A673 (cell line): ENCODE measurements at regions of chr11 and their contacts with region 1.

Region 1: GRCh38 chr11:35617687-35618496 is at the start of gene FJX1:
- DNase-seq: peak; percentile 98
- H3K4me3 ChIP-seq: peak within 1 kb of the TSS; percentile 56
- H3K27ac ChIP-seq: peak within 1 kb of the TSS; percentile 72
- H3K4me1 ChIP-seq: peaks cover 54% of the 10 kb centered on the region
- H3K27me3 ChIP-seq: peaks cover 7% of the 10 kb centered on the region
- CTCF ChIP-seq: no peak
- total RNA-seq, gene FJX1: 40.4 and 50.1 TPM in 2 replicates

Region 2: DNA sequence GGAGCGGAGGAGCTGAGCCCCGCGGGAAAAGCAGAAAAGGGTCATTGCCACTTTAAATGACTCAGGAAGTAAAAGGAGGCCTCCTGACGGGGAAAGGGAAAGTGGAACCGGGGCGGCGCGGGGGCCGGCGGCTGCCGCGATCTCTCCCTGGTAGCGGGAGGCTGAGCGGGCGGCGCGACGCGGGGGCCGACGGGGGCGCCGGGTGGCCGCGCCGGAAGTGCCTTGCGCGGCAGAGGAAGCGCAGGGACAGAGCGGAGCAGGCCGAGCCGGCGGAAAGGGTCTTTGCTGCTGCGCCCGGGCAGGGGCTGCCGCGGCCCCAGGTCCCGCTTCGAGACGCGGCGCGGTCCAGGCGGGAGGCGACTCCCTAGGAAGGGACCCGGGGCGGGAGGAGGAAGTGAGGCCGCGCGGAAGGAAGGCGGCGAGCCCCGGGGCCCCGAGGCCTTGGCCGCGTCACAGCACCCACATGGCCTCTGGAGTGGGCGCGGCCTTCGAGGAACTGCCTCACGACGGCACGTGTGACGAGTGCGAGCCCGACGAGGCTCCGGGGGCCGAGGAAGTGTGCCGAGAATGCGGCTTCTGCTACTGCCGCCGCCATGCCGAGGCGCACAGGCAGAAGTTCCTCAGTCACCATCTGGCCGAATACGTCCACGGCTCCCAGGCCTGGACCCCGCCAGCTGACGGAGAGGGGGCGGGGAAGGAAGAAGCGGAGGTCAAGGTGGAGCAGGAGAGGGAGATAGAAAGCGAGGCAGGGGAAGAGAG is 44.9 kb after region 1 on chr11 and contains the start of gene TRIM44:
- CTCF ChIA-PET with region 1: no interaction called
- POLR2A ChIA-PET with region 1: no interaction called
- intact Hi-C with region 1: loop called (anchors 1 kb)
- DNase-seq: peak; percentile 98
- H3K4me3 ChIP-seq: peak within 1 kb of the TSS; percentile 57
- H3K27ac ChIP-seq: peak within 1 kb of the TSS; percentile 91
- H3K4me1 ChIP-seq: peaks cover 20% of the 10 kb centered on the region
- H3K27me3 ChIP-seq: no peaks in the 10 kb centered on the region
- CTCF ChIP-seq: no peak
- total RNA-seq, gene TRIM44: 179 and 191 TPM in 2 replicates

Region 3: GRCh38 chr11:35943713-35944655 is 326.1 kb after region 1 on chr11 and contains the start of gene LDLRAD3:
- CTCF ChIA-PET with region 1: no interaction called
- POLR2A ChIA-PET with region 1: no interaction called
- intact Hi-C with region 1: loop called (anchors 5 kb)
- DNase-seq: peak; percentile 97
- H3K4me3 ChIP-seq: peak within 1 kb of the TSS; percentile 50
- H3K27ac ChIP-seq: no peak within 1 kb of the TSS
- H3K4me1 ChIP-seq: peaks cover 6% of the 10 kb centered on the region
- H3K27me3 ChIP-seq: peaks cover 12% of the 10 kb centered on the region
- CTCF ChIP-seq: no peak
- total RNA-seq, gene LDLRAD3: 13.1 and 18.0 TPM in 2 replicates

Region 4: DNA sequence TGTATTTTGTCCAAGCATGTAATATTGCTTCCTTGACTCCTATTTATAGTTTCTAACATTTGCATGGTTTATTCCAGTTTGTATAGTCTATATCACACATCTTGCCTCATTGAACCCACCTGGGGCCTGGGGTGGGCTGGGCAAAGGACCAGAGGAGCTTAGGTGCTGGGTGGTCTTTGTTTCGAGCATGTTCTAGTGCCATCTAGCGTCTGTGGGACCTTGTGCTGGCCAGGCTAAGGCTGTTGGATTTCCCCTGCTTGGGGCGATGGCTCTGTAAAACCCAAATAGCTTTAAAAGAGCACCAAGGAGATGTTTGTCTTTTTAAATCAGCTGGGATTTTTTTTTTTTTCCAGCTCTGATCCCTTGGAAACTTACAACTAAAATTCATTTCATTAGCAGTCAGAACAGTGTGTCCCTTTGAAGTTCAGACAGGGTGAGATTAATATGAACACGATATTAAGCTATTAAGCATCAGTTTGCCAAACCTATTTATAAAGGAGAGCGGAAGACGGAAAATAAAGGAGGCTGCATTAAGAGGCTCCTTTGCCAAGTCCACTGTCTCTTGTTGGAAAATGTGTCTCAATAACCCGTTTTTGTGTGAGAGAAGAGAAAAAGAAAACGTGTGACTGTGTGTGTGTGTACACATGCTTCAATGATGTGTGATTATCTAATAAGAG is 514.0 kb after region 1 on chr11:
- CTCF ChIA-PET with region 1: interaction called, 4 read pairs
- POLR2A ChIA-PET with region 1: no interaction called
- intact Hi-C with region 1: loop called (anchors 1 kb)
- DNase-seq: peak; percentile 77
- H3K4me3 ChIP-seq: no peak overlapping the region
- H3K27ac ChIP-seq: no peak overlapping the region
- H3K4me1 ChIP-seq: peaks cover 1% of the 10 kb centered on the region
- H3K27me3 ChIP-seq: no peaks in the 10 kb centered on the region
- CTCF ChIP-seq: peak; percentile 99

Region 5: DNA sequence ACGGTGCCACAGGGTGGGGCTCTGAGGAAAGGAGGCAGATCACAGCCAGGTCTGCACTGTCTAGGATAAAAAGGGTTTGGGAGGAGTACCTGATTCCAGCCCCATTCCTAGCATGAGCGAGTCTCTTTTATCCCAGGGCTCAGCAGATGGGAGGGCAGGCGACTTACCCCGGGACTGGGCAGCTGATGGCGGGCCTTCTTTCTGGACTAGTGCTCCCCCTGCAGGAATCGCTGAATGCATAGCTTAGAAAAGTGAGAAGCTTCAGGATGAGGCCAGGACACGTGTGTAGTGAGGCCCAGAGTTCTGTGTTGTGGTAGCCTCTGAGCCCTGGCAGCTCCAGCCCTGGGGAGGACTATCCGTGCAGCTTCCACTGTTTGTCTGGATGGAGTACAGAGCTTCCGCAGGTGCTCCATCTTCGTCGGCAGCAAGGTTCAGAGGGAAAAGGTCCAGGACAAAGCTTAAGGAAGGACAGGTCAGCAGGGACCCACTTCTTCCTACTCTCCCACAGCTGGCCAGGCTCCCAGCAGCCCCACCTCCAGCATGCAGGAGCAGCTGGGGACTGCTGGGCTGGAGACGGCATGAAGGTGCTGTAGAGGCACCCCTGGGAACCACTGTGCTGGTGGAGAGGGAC is 641.0 kb after region 1 on chr11:
- CTCF ChIA-PET with region 1: interaction called, 6 read pairs
- POLR2A ChIA-PET with region 1: no interaction called
- intact Hi-C with region 1: loop called (anchors 2 kb)
- DNase-seq: peak; percentile 93
- H3K4me3 ChIP-seq: no peak overlapping the region
- H3K27ac ChIP-seq: no peak overlapping the region
- H3K4me1 ChIP-seq: no peaks in the 10 kb centered on the region
- H3K27me3 ChIP-seq: peaks cover 20% of the 10 kb centered on the region
- CTCF ChIP-seq: peak; percentile 99

Region 6: DNA sequence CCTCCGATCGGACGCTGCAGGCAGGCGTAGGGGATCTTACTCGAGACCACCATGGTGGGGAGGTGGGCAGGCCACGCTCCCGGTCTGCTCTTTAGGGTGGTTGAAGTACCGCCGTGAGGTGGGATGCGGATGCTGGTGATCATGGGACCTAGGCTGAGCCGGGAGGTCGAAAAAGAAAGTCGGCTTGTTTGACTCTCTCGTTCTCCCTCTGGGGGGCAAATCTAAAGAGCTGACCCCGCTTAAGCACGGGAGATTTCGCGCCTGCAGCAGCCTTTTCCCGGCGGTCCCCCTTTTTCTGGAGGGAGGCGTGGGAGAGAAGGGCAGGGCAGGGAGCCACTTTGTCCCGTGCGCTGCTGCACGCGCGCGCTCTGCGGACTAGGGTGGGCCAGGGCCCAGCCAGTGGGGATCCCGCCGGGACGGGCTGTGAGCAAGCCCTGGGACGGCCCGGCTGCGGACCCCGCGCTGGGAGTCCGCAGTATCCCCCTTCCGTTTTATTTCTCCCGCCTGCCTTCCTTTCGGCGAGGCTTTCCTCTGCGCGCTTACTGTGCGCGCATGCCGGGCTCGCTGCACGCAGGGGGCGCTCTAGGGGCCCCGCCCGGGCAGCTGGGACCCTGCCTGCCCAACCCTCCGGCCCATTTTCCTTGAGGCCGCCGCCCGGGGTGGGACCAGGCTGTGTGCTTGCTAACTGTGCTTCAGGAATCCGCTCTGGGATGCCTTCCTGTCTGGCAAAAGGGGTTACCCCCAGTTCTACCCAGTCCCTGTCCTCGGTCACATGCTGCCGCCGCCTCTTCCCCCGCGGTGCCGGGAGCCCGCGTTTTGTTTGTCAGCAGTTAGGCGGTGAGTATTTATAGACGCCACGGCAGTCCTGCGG is 759.2 kb after region 1 on chr11:
- CTCF ChIA-PET with region 1: no interaction called
- POLR2A ChIA-PET with region 1: no interaction called
- intact Hi-C with region 1: loop called (anchors 10 kb)
- DNase-seq: peak; percentile 91
- H3K4me3 ChIP-seq: peak overlapping the region; percentile 57
- H3K27ac ChIP-seq: peak overlapping the region; percentile 47
- H3K4me1 ChIP-seq: peaks cover 72% of the 10 kb centered on the region
- H3K27me3 ChIP-seq: no peaks in the 10 kb centered on the region
- CTCF ChIP-seq: peak; percentile 99